Activated T-helper 2 cell treated with anti-CD3 and anti-CD28 coated beads, Interferon-gamma antibody, Interleukin-2, Interleukin-4, amounts not matched to agents 10 μg/mL and 5 μg/mL and 100 μg/mL, durations not matched to agents 14 hours and 24 hours and 36 hours (primary cell): ENCODE measurements at regions of chr5 and their contacts with region 1.

Region 1: GRCh38 chr5:89313804-89314588 is 431.0 kb upstream of the MEF2C start:
- DNase-seq: no peak
- H3K4me3 Mint-ChIP-seq: no peak overlapping the region
- H3K27ac Mint-ChIP-seq: peak overlapping the region; percentile 84
- H3K4me1 Mint-ChIP-seq: peaks cover 24% of the 10 kb centered on the region
- H3K27me3 Mint-ChIP-seq: peaks cover 2% of the 10 kb centered on the region

Region 2: DNA sequence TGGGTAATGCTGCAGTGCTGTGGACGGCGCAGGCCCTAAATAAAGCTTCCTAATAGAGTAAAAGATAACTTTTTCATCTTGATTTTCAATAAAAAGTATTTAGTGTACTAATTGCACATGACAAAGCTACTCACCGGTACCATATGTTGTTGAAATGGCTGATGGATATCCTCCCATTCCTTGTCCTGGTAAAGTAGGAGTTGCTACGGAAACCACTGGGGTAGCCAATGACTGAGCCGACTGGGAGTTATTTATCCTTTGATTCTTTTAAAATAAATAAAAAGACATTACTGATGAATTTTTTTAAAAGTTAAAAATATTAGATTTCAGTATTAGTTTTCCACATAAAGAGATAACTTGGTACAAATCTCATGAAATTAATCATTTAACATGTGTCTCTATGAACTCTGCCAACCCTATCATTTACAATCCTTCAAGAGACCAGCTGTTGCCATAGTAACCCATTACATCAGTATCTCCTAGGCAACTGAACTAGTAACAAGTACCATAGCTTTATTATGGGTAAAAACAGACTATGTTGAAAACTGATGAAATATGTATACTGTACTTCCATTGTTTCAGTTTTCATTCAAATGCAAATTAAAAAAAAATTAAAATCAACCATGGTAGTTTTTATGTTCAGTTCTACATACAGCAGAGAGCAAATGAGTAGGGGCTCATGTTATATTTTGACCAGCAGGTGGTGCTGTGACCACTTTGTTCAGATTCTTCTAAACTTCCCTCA is 584.7 kb before region 1 on chr5:
- intact Hi-C with region 1: loop called (anchors 5 kb)
- DNase-seq: peak; percentile 34
- H3K4me3 Mint-ChIP-seq: no peak overlapping the region
- H3K27ac Mint-ChIP-seq: no peak overlapping the region
- H3K4me1 Mint-ChIP-seq: peaks cover 5% of the 10 kb centered on the region
- H3K27me3 Mint-ChIP-seq: peaks cover 12% of the 10 kb centered on the region

Region 3: GRCh38 chr5:88845081-88845697 is 468.8 kb before region 1 on chr5:
- intact Hi-C with region 1: loop called (anchors 1 kb)
- DNase-seq: no peak
- H3K4me3 Mint-ChIP-seq: no peak overlapping the region
- H3K27ac Mint-ChIP-seq: no peak overlapping the region
- H3K4me1 Mint-ChIP-seq: peaks cover 7% of the 10 kb centered on the region
- H3K27me3 Mint-ChIP-seq: peaks cover 26% of the 10 kb centered on the region

Region 4: DNA sequence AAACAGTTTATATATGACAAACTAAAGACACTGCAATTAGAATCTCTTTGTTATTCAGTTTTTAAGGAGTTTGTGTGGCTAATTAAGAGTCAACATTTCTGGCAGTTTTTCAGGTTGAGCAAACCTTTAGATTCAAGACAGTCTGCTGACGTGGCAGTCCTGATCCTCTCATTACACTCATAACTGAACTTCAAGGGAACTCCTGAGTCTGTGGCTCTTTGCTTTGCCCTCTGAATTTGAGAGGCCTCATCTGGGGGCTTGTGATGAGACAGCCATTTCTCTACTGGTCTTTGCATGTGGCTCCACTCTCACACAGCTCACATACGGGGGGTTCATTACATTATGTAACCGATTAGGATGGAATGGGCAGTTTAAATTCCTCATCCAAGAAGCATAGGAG is 248.1 kb before region 1 on chr5:
- intact Hi-C with region 1: loop called (anchors 2 kb)
- DNase-seq: peak; percentile 10
- H3K4me3 Mint-ChIP-seq: no peak overlapping the region
- H3K27ac Mint-ChIP-seq: peak overlapping the region; percentile 77
- H3K4me1 Mint-ChIP-seq: peaks cover 24% of the 10 kb centered on the region
- H3K27me3 Mint-ChIP-seq: no peaks in the 10 kb centered on the region

Region 5: DNA sequence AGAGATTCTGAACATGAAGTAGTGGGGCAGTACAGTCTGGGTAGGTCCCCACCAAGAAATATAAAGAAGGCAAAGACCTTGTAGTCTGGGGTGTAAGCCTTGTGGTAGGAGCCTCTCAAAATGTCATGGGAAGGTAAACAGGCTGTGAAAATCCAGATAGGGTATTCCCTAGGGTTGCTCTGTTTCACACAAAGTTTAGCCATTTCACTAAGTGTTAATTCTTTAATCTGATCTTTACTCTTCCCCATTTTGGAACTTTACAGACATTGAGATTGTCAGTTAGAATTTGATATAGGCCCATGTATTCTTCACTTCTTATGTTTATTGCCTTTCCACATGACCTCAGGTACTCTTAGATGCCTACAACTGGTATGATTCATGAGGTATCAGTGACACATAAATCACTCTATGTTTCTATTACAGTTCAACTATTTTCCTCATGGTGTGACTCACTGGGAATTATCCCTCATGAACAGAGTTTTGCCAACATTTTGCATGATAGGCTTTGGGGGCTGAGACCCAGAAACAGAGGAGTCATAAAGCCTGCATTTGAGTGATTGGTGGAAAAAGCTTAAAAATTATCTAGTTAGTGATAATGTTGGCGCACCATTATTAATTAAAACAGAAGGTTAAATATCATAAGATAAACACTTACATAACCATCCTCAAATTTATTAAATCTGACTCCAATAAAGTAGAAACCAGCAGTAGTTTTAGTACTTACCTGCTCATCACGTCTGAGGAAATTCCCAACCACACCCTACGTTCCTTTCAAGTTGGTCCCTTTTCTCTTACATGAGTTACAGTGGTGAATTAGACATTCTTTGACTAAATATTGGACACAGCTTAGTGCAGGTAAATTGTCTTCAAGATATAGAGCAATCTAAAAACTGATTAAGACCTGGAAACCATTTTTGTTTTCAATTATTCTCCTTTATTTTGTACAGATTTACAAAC is 31.2 kb before region 1 on chr5:
- intact Hi-C with region 1: loop called (anchors 1 kb)
- DNase-seq: no peak
- H3K4me3 Mint-ChIP-seq: no peak overlapping the region
- H3K27ac Mint-ChIP-seq: no peak overlapping the region
- H3K4me1 Mint-ChIP-seq: no peaks in the 10 kb centered on the region
- H3K27me3 Mint-ChIP-seq: no peaks in the 10 kb centered on the region

Region 6: GRCh38 chr5:89343666-89344065 is 29.7 kb after region 1 on chr5:
- intact Hi-C with region 1: loop called (anchors 2 kb)
- DNase-seq: no peak
- H3K4me3 Mint-ChIP-seq: no peak overlapping the region
- H3K27ac Mint-ChIP-seq: no peak overlapping the region
- H3K4me1 Mint-ChIP-seq: peaks cover 4% of the 10 kb centered on the region
- H3K27me3 Mint-ChIP-seq: no peaks in the 10 kb centered on the region